ENCODE measurements at regions of chr4 and their contacts with region 1.

Region 1: DNA sequence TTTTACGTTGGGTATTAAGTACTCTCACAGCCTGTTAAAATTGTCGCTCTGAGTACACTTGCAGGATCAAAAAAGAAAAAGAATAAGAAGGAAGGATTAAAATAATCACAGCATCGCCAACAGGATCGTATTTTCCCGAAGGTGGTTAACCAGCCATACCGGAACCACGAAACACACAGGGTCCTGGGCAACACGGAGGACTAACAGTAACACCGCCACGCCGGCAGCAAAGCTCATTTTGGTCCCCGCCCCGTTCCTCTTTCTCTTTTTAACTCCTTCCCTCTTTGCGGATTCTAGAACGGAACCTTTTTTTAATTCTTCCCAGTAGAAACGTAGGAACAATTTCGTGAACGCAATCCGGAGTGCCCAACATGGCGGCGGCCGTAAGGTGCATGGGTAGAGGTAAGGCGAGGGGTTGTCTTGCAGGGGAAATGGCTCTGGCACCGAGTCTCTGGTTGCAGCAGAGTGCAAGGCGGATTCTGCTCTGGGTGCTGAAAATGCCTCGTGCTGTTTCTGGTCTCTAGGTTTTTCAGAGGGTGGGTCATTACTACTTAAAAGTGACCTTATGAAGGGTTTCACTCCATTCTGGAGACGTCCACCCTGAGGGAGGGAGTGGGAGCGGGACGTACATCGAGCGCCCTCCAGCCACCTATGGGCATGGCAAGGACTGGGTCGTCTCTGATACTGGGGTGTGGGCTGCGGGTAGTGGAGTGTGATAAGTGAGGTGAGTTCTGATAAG is at the start of gene MRPL1:
- DNase-seq: peak; percentile 76 to 83
- H3K4me3 ChIP-seq: peak within 1 kb of the TSS; percentile 81
- H3K27ac ChIP-seq: peak within 1 kb of the TSS; percentile 92
- H3K4me1 ChIP-seq: peaks cover 16% of the 10 kb centered on the region; the same call in 1 of the 2 replicates
- H3K27me3 ChIP-seq: no peaks in the 10 kb centered on the region
- CTCF ChIP-seq: no peak
- total RNA-seq, gene MRPL1: 16.7 and 20.3 TPM in 2 replicates

Region 2: GRCh38 chr4:77636902-77637301 is 225.7 kb before region 1 on chr4:
- CTCF ChIA-PET with region 1: no interaction called
- POLR2A ChIA-PET with region 1: interaction called, 21 read pairs
- intact Hi-C with region 1: no loop called
- DNase-seq: peak; percentile 8 to 51
- H3K4me3 ChIP-seq: no peak overlapping the region
- H3K27ac ChIP-seq: peak overlapping the region; percentile 36; the same call in 1 of the 2 replicates
- H3K4me1 ChIP-seq: no peaks in the 10 kb centered on the region; the same call in 1 of the 2 replicates
- H3K27me3 ChIP-seq: no peaks in the 10 kb centered on the region
- CTCF ChIP-seq: no peak

Region 3: GRCh38 chr4:77819843-77820648 is 42.6 kb before region 1 on chr4:
- CTCF ChIA-PET with region 1: interaction called, 6 read pairs
- POLR2A ChIA-PET with region 1: interaction called, 3 read pairs
- intact Hi-C with region 1: loop called (anchors 2 kb)
- DNase-seq: peak; percentile 56 to 80
- H3K4me3 ChIP-seq: peak overlapping the region; percentile 90
- H3K27ac ChIP-seq: peak overlapping the region; percentile 64
- H3K4me1 ChIP-seq: peaks cover 19% of the 10 kb centered on the region
- H3K27me3 ChIP-seq: no peaks in the 10 kb centered on the region
- CTCF ChIP-seq: no peak

Region 4: DNA sequence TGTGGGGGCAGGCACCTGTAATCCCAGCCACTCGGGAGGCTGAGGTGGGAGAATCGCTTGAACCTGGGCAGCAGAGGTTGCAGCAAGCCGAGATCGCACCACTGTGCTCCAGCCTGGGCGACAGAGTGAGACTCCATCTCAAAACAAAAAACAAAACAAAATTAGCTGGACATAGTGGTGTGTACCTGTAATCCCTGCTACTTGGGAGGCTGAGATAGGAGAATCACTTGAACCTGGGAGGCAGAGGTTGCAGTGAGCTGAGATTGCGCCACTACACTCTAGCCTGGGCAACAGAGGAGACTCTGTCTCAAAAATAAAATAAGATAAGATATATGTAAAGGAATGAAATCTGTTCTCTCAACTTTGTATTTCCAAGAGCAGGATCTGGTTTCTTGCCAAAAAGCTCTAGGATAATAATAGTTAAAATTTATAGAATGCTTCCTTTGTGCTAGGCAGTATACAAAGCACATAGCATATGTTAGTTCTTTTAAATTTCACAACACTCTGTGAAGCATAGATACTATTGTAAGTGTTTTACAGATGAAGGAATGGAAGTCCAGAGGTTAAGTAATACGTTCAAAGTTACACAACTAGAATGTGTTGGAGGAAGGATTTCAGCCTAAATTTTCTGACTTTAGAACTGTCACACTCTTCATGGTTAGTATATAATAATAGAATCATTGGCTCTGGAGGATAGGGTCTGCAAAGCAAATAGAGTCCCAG is 10.2 kb after region 1 on chr4:
- CTCF ChIA-PET with region 1: no interaction called
- POLR2A ChIA-PET with region 1: no interaction called
- intact Hi-C with region 1: no loop called
- DNase-seq: no peak
- H3K4me3 ChIP-seq: no peak overlapping the region
- H3K27ac ChIP-seq: no peak overlapping the region
- H3K4me1 ChIP-seq: no peaks in the 10 kb centered on the region
- H3K27me3 ChIP-seq: no peaks in the 10 kb centered on the region
- CTCF ChIP-seq: no peak

Region 5: DNA sequence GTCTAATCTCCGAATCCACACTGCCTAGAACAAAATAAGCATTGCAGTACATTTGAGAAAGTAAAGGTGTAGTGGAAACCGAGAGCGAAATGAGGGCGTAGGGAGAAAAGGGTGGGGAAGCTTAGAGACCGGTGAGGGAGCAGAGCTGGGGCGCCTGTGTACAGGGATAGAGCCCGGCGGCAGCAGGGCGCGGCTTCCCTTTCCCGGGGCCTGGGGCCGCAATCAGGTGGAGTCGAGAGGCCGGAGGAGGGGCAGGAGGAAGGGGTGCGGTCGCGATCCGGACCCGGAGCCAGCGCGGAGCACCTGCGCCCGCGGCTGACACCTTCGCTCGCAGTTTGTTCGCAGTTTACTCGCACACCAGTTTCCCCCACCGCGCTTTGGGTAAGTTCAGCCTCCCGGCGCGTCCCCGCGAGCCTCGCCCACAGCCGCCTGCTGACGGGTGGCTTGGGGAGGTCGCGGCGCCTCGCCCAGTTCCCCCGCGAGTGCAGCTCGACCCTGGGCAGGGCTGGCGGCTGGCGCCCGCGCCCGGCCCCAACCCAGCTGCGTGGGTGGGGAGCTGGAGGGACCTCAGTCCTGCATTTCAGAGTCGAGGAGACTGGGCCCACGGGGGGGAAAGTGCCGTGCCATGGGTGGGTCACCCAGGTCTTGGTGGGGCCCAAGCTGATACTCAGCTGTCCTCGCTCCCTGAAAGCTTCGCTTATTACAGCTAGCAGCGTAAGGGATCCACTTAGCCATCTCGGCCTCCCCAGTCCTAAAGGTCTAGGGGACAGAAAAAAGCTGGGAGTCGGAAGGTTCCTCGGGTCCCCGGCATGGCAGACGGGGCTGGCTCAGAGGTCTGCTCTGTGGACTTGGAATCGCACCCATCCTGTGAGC is 689.1 kb after region 1 on chr4 and contains the start of gene ANXA3:
- CTCF ChIA-PET with region 1: no interaction called
- POLR2A ChIA-PET with region 1: interaction called, 10 read pairs
- intact Hi-C with region 1: no loop called
- DNase-seq: peak; percentile 51 to 72
- H3K4me3 ChIP-seq: peak within 1 kb of the TSS; percentile 88
- H3K27ac ChIP-seq: peak within 1 kb of the TSS; percentile 99
- H3K4me1 ChIP-seq: peaks cover 47% of the 10 kb centered on the region
- H3K27me3 ChIP-seq: no peaks in the 10 kb centered on the region
- CTCF ChIP-seq: no peak
- total RNA-seq, gene ANXA3: 139 and 140 TPM in 2 replicates

Region 6: GRCh38 chr4:78560296-78560963 is 697.8 kb after region 1 on chr4:
- CTCF ChIA-PET with region 1: no interaction called
- POLR2A ChIA-PET with region 1: interaction called, 14 read pairs
- intact Hi-C with region 1: no loop called
- DNase-seq: peak; percentile 35 to 78
- H3K4me3 ChIP-seq: no peak overlapping the region
- H3K27ac ChIP-seq: peak overlapping the region; percentile 52
- H3K4me1 ChIP-seq: peaks cover 80% of the 10 kb centered on the region
- H3K27me3 ChIP-seq: no peaks in the 10 kb centered on the region
- CTCF ChIP-seq: no peak

Measured in PC-9 (cell line).